Heart right ventricle (tissue), 16 donors: ENCODE measurements at regions of chr6 and their contacts with region 1.

Region 1: GRCh38 chr6:32234934-32235333 is 11.1 kb upstream of the NOTCH4 start:
- DNase-seq: peak in 1 of 2 donors; percentile 25
- ATAC-seq: peak; percentile 47 to 90 (median 74)
- H3K4me3 ChIP-seq: no peak overlapping the region
- H3K27ac ChIP-seq: peak overlapping the region; percentile 45 to 92 (median 76)
- H3K4me1 ChIP-seq: peaks cover 0 to 20% (median 4%) of the 10 kb centered on the region in 9 donors
- H3K27me3 ChIP-seq: no peaks in the 10 kb centered on the region
- CTCF ChIP-seq: peak in 3 of 9 donors; percentile 27 to 54 (median 33)

Region 2: GRCh38 chr6:31383149-31383548 is 851.8 kb before region 1 on chr6:
- intact Hi-C with region 1: no loop called
- DNase-seq: no peak
- ATAC-seq: no peak
- H3K4me3 ChIP-seq: no peak overlapping the region
- H3K27ac ChIP-seq: no peak overlapping the region
- H3K4me1 ChIP-seq: no peaks in the 10 kb centered on the region
- H3K27me3 ChIP-seq: peaks cover 0 to 23% (median 6%) of the 10 kb centered on the region in 7 donors
- CTCF ChIP-seq: no peak

Region 3: GRCh38 chr6:32118782-32119628 is 115.9 kb before region 1 on chr6:
- intact Hi-C with region 1: loop called in 4 of 10 experiments (anchors 5 to 10 kb)
- DNase-seq: peak; percentile 86 to 88
- ATAC-seq: peak; percentile 73 to 88 (median 80)
- H3K4me3 ChIP-seq: no peak overlapping the region
- H3K27ac ChIP-seq: peak overlapping the region in 9 of 10 donors; percentile 3 to 68 (median 51)
- H3K4me1 ChIP-seq: peaks cover 7 to 34% (median 20%) of the 10 kb centered on the region in 9 donors
- H3K27me3 ChIP-seq: no peaks in the 10 kb centered on the region
- CTCF ChIP-seq: peak; percentile 80 to 97 (median 94)